CD14-positive monocyte (primary cell): ENCODE measurements at regions of chr6 and their contacts with region 1.

Region 1: GRCh38 chr6:80106418-80107235 is at the start of gene BCKDHB:
- DNase-seq: peak; percentile 97 to 98 (median 97)
- H3K4me3 ChIP-seq: peak within 1 kb of the TSS; percentile 55 to 81 (median 65)
- H3K4me3 Mint-ChIP-seq: peak within 1 kb of the TSS; percentile 87 to 97
- H3K27ac ChIP-seq: peak within 1 kb of the TSS in 1 of 2 donors; percentile 59
- H3K27ac Mint-ChIP-seq: peak within 1 kb of the TSS; percentile 41 to 90 (median 81)
- H3K4me1 ChIP-seq: peaks cover 8 to 13% of the 10 kb centered on the region in 2 donors
- H3K4me1 Mint-ChIP-seq: peaks cover 15% of the 10 kb centered on the region
- H3K27me3 ChIP-seq: peaks cover 0 to 2% of the 10 kb centered on the region in 2 donors
- H3K27me3 Mint-ChIP-seq: peaks cover 3 to 6% (median 5%) of the 10 kb centered on the region in 3 donors
- CTCF ChIP-seq: no peak
- polyA plus RNA-seq, gene BCKDHB: 1.8 to 4.6 (median 4.0) TPM

Region 2: DNA sequence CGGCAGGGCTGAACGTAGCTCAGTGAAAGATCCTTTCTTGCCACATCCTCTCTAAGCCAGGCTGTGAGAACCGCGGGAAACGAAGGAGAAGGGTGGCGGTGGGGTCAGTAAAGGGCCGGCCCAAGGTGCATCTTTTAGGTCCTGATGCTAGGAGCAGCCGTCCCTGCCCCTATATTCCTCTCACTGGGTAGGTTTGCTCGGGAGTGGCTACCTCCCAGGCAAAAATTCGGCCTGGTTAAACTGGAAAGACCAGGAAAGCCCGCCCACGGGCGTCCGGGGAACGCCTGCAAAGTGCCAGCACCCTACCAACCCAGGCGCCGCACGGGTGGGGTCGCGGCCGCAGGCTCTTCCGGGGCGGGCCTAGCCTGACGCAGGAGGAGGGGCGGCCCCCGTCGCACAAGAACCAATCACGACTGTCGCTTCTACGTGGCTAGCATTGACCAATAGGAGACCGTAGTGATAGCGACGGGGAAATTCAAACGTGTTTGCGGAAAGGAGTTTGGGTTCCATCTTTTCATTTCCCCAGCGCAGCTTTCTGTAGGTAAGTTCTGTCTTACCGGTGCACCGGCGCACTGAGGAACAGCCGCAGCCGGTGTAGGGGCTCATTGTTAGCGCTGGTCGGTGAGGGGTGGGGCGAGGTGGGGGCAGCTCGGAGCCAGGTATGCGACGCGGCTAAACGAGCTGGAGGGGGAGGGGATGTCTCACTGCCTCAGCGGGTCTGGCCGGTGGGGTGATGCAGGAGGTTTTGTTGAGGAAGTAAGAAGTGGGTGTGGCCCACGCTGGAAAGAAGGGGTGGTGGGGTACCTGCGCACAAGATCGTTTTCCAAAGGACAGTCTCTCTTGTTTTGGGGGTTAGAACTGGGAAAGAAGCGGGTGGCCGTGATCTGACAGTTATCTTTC is 102.2 kb before region 1 on chr6 and contains the start of gene TTK:
- intact Hi-C with region 1: loop called (anchors 5 kb)
- DNase-seq: peak; percentile 85 to 93 (median 90)
- H3K4me3 ChIP-seq: peak within 1 kb of the TSS; percentile 70 to 94 (median 84)
- H3K4me3 Mint-ChIP-seq: peak within 1 kb of the TSS; percentile 86 to 97
- H3K27ac ChIP-seq: peak within 1 kb of the TSS; percentile 75 to 84
- H3K27ac Mint-ChIP-seq: peak within 1 kb of the TSS; percentile 86 to 95 (median 92)
- H3K4me1 ChIP-seq: peaks cover 12 to 21% of the 10 kb centered on the region in 2 donors
- H3K4me1 Mint-ChIP-seq: peaks cover 18% of the 10 kb centered on the region
- H3K27me3 ChIP-seq: no peaks in the 10 kb centered on the region
- H3K27me3 Mint-ChIP-seq: peaks cover 0 to 2% (median 2%) of the 10 kb centered on the region in 3 donors
- CTCF ChIP-seq: no peak
- polyA plus RNA-seq, gene TTK: not detected